CD8-positive, alpha-beta T cell (primary cell): ENCODE measurements at regions of chr9 and their contacts with region 1.

Region 1: DNA sequence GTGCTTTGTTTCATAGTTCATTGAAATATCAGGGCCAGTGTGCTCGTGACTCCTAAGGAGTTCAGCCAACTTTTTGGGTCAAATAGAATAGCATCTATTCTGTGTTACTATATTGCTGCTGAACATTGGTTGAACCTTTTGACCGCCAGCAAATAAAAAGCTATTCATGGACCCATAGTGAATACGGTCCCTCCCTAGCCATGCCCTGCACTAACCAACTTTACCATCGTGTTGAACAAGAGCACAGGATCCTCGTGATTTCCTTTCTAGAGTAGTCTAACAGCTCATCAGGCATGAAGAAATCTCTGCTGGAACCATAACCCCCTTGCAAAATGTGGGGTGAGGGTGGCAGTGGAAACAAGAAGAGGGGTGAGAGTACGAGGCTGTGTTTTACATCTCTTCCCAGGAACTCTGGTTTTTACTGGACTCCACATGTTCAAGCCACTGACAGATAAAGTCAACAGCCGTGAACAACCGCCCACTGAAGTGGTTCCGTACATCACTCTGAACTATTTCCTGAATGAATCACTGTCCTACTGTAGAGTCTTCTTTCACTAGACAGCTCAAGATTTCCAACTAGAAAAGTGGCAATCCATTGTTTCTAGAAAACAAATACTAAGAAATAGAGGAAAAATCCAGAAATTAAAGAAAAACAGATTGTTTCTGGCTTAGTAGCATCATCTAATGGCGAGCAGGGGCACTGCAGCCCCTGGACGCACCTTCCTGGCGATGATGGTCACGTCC is 70.1 kb upstream of the SPATA31E1 start:
- DNase-seq: no peak
- ATAC-seq: no peak
- H3K4me3 ChIP-seq: no peak overlapping the region
- H3K4me3 Mint-ChIP-seq: no peak overlapping the region
- H3K27ac ChIP-seq: no peak overlapping the region
- H3K27ac Mint-ChIP-seq: no peak overlapping the region
- H3K4me1 ChIP-seq: no peaks in the 10 kb centered on the region
- H3K4me1 Mint-ChIP-seq: no peaks in the 10 kb centered on the region
- H3K27me3 ChIP-seq: no peaks in the 10 kb centered on the region
- H3K27me3 Mint-ChIP-seq: peaks cover 14% of the 10 kb centered on the region
- CTCF ChIP-seq: no peak

Region 2: DNA sequence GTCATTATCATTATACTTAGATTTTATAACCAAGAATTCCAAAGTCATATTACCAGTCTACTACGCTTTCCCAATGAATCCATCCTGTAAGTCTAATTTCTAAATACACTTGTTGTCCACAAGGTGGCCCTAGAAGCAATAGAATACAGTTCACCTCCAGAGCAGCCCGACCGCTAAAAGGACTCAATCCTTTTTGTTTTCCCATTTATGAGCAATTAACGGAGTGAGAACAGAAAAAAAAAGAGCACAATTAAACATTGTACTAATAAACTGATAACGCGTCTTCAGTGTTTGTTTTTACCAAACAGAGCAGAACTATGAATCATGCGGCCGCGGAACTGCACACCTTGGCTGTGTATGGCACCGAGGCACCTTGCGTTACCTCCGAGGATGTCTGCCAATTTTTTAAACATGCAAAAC is 475.6 kb before region 1 on chr9:
- CTCF ChIA-PET with region 1: no interaction called
- POLR2A ChIA-PET with region 1: no interaction called
- intact Hi-C with region 1: loop called in 1 of 2 experiments (anchors 10 kb)
- DNase-seq: peak in 2 of 9 experiments; percentile 37 to 54
- ATAC-seq: no peak
- H3K4me3 ChIP-seq: peak overlapping the region in 1 of 2 experiments; percentile 49
- H3K4me3 Mint-ChIP-seq: peak overlapping the region; percentile 70
- H3K27ac ChIP-seq: no peak overlapping the region
- H3K27ac Mint-ChIP-seq: no peak overlapping the region
- H3K4me1 ChIP-seq: no peaks in the 10 kb centered on the region
- H3K4me1 Mint-ChIP-seq: peaks cover 13% of the 10 kb centered on the region
- H3K27me3 ChIP-seq: peaks cover 3 to 11% of the 10 kb centered on the region in 2 experiments
- H3K27me3 Mint-ChIP-seq: peaks cover 39% of the 10 kb centered on the region
- CTCF ChIP-seq: peak; percentile 55

Region 3: GRCh38 chr9:87678650-87679515 is 133.7 kb before region 1 on chr9:
- CTCF ChIA-PET with region 1: interaction called, 3 read pairs
- POLR2A ChIA-PET with region 1: no interaction called
- intact Hi-C with region 1: loop called (anchors 2 to 10 kb)
- DNase-seq: peak in 5 of 9 experiments; percentile 18 to 48 (median 29)
- ATAC-seq: no peak
- H3K4me3 ChIP-seq: no peak overlapping the region
- H3K4me3 Mint-ChIP-seq: no peak overlapping the region
- H3K27ac ChIP-seq: no peak overlapping the region
- H3K27ac Mint-ChIP-seq: no peak overlapping the region
- H3K4me1 ChIP-seq: no peaks in the 10 kb centered on the region
- H3K4me1 Mint-ChIP-seq: no peaks in the 10 kb centered on the region
- H3K27me3 ChIP-seq: no peaks in the 10 kb centered on the region
- H3K27me3 Mint-ChIP-seq: no peaks in the 10 kb centered on the region
- CTCF ChIP-seq: peak; percentile 36

Region 4: GRCh38 chr9:87684627-87685219 is 127.8 kb before region 1 on chr9:
- CTCF ChIA-PET with region 1: no interaction called
- POLR2A ChIA-PET with region 1: no interaction called
- intact Hi-C with region 1: loop called (anchors 2 to 10 kb)
- DNase-seq: no peak
- ATAC-seq: no peak
- H3K4me3 ChIP-seq: no peak overlapping the region
- H3K4me3 Mint-ChIP-seq: no peak overlapping the region
- H3K27ac ChIP-seq: no peak overlapping the region
- H3K27ac Mint-ChIP-seq: no peak overlapping the region
- H3K4me1 ChIP-seq: peaks cover 5% of the 10 kb centered on the region
- H3K4me1 Mint-ChIP-seq: peaks cover 8% of the 10 kb centered on the region
- H3K27me3 ChIP-seq: no peaks in the 10 kb centered on the region
- H3K27me3 Mint-ChIP-seq: no peaks in the 10 kb centered on the region
- CTCF ChIP-seq: no peak